Head of caudate nucleus (tissue), 42 donors: ENCODE measurements at regions of chr19 and their contacts with region 1.

Region 1: GRCh38 chr19:44954824-44955586 is at the start of gene CLPTM1:
- DNase-seq: peak; percentile 90 to 98 (median 97)

Region 2: DNA sequence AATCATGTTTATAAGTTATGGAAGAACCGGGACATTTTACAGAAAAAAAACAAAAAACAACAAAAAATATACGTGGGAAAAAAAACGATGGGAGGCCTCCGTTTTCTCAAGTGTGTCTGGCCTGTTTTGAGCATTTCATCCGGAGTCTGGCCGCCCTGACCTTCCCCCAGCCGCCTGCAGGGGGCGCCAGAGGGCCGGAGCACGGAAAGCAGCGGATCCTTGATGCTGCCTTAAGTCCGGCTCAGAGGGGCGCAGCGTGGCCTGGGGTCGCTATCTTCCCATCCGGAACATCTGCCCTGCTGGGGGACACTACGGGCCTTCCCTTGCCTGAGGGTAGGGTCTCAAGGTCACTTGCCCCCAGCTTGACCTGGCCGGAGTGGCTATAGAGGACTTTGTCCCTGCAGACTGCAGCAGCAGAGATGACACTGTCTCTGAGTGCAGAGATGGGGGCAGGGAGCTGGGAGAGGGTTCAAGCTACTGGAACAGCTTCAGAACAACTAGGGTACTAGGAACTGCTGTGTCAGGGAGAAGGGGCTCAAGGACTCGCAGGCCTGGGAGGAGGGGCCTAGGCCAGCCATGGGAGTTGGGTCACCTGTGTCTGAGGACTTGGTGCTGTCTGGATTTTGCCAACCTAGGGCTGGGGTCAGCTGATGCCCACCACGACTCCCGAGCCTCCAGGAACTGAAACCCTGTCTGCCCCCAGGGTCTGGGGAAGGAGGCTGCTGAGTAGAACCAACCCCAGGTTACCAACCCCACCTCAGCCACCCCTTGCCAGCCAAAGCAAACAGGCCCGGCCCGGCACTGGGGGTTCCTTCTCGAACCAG is 51.2 kb before region 1 on chr19:
- intact Hi-C with region 1: loop called (anchors 5 kb)
- DNase-seq: peak; percentile 51 to 94 (median 84)

Region 3: DNA sequence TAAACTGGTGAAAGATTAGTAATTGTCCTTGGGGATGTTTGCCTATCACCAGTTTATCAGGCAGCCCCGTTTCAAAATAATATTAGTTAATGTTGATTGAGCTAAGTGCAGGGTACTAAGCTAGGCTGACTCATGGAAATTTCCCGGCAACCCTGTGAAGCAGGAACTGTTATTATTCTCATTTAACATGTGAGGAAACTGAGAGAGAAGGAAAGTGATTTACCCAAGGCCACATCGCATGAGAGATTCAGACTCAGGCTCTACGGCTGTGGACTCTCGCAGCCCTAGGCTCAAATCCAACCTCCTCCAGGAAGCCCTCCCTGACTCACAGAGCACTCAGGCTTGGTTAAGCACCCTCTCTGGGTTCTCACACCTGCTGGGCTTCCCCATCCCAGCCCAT is 19.9 kb after region 1 on chr19:
- intact Hi-C with region 1: no loop called
- DNase-seq: no peak